Dendritic cell treated with granulocyte-macrophage colony-stimulating factor and Interleukin-4, amounts not matched to agents 40 ng/mL and 50 ng/mL, for 4 days (primary cell): ENCODE measurements at regions of chr22 and their contacts with region 1.

Region 1: DNA sequence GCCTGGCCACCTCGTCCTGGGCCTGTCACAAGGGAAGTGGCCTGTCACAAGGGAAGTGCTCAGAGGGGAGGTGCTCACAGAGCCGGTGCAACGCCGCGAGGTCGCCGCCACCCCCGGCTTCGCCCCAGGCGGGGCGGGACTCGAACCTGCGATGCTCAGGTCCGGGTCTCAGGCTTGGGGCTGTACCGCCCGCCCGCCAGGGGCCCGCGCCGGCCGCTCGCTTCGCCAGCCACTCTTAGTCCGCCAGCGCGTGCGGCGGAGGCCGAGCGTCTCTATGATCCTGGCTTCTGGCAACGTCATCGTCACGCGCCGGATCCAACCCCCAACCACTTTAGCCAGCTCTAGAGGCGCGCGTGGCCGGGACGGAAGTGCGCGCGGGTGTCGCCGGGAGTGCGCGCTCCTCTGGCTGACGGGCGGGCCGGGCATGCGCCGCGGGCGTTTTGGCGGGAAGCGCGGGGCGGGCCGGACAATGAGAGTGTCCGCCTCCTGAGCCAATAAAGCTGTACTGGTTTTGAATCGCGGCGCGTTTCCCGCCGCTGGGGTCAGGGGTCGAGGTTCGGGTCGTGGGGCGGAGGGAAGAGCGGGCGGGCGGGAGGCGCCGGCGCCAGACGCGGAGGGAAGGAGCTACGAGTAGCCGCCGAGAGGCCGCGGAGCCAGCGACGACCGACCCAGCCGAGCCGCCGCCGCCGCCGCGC is at the start of gene TRMT2A:
- H3K4me3 Mint-ChIP-seq: peak within 1 kb of the TSS; percentile 88
- H3K27ac Mint-ChIP-seq: peak within 1 kb of the TSS; percentile 96
- H3K4me1 Mint-ChIP-seq: peaks cover 38% of the 10 kb centered on the region
- H3K27me3 Mint-ChIP-seq: no peaks in the 10 kb centered on the region

Region 2: DNA sequence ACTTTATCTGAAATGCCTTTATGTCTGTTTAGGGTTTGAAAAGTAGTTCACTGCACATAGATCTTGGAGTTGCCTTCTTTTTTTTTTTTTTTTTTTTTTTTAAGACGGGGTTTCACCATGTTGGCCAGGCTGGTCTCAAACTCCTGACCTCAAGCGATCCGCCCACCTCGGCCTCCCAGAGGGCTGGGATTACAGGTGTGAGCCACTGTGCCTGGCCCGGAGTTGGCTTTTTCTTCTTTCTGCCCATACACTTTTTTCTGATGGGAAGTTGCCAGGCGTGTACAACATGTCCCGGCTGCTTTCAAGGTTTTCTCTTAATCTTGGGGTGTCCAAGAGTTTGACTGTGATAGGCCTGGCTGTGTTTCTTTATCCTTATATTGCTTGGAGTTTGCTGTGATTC is 249.5 kb before region 1 on chr22:
- intact Hi-C with region 1: no loop called
- H3K4me3 Mint-ChIP-seq: no peak overlapping the region
- H3K27ac Mint-ChIP-seq: no peak overlapping the region
- H3K4me1 Mint-ChIP-seq: peaks cover 6% of the 10 kb centered on the region
- H3K27me3 Mint-ChIP-seq: no peaks in the 10 kb centered on the region

Region 3: DNA sequence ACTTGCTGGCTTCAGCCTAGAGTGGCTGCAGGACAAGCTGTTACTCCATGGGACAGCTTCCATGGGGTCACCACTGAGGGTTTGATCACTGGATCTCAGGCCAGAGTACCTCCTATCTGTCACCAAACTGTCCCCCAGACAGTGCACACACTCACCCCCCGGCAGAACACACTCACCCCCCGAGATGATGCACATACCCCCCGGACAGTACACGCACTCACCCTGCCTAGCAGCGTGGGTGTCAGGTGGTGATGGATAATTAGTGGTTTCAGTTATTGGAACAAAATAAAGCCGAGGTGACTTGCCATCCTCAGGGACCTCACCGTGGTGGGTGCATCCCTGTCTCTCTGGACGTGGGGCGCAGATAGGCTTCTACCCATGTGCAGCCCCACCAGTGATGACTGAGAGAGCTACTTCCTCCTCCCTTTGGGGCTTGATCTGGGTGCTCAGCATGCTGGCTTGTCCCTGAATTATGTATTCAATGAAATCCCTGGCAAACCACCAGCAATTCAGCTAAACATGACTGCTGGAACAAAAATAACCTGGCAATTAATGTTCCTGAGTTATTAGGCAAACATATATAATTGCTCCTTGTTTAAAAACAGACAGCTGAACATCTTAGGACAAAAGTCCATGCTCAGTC is 77.3 kb before region 1 on chr22:
- intact Hi-C with region 1: no loop called
- H3K4me3 Mint-ChIP-seq: no peak overlapping the region
- H3K27ac Mint-ChIP-seq: no peak overlapping the region
- H3K4me1 Mint-ChIP-seq: peaks cover 14% of the 10 kb centered on the region
- H3K27me3 Mint-ChIP-seq: no peaks in the 10 kb centered on the region

Region 4: GRCh38 chr22:20079745-20080444 is 37.2 kb before region 1 on chr22 and contains the start of gene DGCR8:
- intact Hi-C with region 1: loop called (anchors 1 kb)
- H3K4me3 Mint-ChIP-seq: peak within 1 kb of the TSS; percentile 81
- H3K27ac Mint-ChIP-seq: peak within 1 kb of the TSS; percentile 79
- H3K4me1 Mint-ChIP-seq: peaks cover 41% of the 10 kb centered on the region
- H3K27me3 Mint-ChIP-seq: no peaks in the 10 kb centered on the region

Region 5: GRCh38 chr22:20130739-20131596 is 13.9 kb after region 1 on chr22:
- intact Hi-C with region 1: loop called (anchors 1 kb)
- H3K4me3 Mint-ChIP-seq: peak overlapping the region; percentile 63
- H3K27ac Mint-ChIP-seq: no peak overlapping the region
- H3K4me1 Mint-ChIP-seq: peaks cover 40% of the 10 kb centered on the region
- H3K27me3 Mint-ChIP-seq: no peaks in the 10 kb centered on the region